ENCODE measurements at regions of chr7 and their contacts with region 1.

Region 1: DNA sequence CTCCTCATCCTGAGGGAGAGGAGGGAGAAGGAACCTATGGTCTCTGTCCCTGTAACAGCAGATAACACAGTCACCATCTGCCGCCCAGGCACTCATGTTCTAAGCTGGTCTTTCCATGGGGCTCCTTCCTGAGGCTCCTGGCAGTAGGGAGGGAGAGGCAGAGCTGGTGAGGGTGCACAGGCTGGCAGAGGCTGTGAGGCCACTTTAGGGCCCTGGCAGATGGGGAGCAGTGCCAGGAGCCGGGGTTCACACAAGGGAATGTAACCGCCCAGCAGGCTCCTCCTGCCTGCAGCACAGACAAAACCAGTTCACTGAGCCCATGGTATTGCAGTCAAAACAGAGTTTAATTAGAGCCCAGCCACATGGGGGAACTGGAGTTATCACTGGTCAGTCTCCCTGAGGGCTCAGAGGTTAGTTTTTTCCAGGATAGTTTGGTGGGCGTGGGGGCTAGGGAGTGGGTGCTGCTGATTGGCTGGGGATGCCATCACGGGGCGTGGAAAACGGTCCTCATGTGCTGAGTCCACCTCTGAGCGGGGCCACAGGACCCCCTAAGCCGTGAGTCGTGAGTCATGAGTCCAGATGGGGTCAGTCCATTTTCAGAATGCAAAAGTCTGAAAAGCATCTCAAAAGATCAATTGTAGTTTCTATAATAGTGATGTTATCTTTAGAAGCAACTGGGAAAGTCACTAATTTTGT is 499.3 kb upstream of the FOXK1 start:
- DNase-seq: no peak
- H3K4me3 ChIP-seq: no peak overlapping the region
- H3K27ac ChIP-seq: no peak overlapping the region
- H3K4me1 ChIP-seq: no peaks in the 10 kb centered on the region
- H3K27me3 ChIP-seq: no peaks in the 10 kb centered on the region
- CTCF ChIP-seq: no peak

Region 2: GRCh38 chr7:4136501-4137110 is 46.1 kb before region 1 on chr7:
- CTCF ChIA-PET with region 1: no interaction called
- dilution Hi-C with region 1: loop called (anchors 5 kb)
- in situ Hi-C with region 1: no loop called
- intact Hi-C with region 1: no loop called
- DNase-seq: no peak
- H3K4me3 ChIP-seq: no peak overlapping the region
- H3K27ac ChIP-seq: no peak overlapping the region
- H3K4me1 ChIP-seq: no peaks in the 10 kb centered on the region
- H3K27me3 ChIP-seq: no peaks in the 10 kb centered on the region
- CTCF ChIP-seq: no peak

Region 3: DNA sequence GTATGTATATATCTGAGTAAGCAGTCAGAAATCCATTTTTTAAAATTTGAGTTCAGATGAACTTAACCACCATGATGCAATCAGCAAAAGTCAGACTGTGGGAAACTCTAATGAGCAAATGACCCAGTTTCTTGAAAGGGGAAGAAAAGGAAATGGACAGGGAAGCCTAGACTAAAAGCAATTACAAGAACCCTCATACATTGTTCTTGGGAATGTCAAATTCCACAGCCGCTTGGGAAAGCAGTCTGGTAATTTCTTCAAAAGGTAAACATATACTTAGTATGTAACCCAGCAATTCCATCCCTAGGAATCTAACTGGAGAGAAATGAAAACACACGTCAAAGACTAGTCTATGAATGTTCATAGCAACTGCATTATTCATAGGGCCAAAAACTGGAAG is 482.9 kb after region 1 on chr7:
- CTCF ChIA-PET with region 1: no interaction called
- dilution Hi-C with region 1: no loop called
- in situ Hi-C with region 1: no loop called
- intact Hi-C with region 1: no loop called
- DNase-seq: peak; percentile 62
- H3K4me3 ChIP-seq: no peak overlapping the region
- H3K27ac ChIP-seq: no peak overlapping the region
- H3K4me1 ChIP-seq: no peaks in the 10 kb centered on the region
- H3K27me3 ChIP-seq: no peaks in the 10 kb centered on the region
- CTCF ChIP-seq: no peak